Naive thymus-derived CD4-positive, alpha-beta T cell (primary cell): ENCODE measurements at regions of chr6 and their contacts with region 1.

Region 1: DNA sequence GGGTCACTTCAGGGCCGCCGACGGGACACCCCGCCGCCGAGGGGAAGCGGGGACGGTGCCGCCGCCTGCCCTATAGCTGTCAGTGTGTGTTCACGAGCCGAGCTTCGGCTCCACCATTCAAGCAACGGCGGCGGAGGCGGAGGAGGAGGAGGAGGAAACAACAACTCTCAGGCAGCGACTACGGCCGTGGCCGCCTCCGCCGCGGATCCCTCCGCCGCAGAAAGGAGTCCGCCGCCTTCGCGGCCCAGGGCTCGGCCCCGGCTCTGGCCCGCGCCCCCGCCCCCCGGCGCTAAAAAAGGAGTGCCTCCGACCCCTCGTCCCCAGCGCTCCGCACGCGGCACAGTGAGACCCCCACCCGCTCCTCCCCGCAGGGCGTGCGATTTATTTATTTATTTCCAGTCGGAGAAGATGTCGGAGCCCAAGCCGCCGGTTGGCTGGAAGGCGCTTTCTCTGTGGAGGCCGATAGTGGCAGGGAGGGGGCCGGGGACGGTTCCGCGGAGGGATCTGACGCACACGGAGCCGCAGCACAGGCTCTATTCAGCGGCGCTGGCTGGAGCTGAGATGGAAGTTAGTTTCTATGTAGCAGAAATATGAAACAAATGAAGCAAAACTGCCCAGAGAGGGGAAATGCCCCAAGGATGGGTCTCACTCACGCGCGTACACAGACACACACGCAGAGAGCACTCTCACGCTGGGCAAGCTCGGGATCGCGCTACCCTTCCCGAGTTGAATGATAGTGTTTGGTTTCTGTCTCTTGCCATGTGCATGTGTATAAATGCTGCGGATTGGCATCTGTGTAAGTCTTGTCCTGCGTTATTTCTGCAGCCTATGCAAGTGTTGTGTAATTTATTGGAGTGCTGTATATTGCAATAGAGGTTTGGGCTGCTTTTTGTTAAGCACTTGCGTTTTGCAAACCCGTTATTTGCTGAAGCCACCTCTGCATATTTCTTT is at the start of gene PHIP:
- DNase-seq: peak; percentile 89 to 97 (median 94)
- ATAC-seq: peak; percentile 90
- H3K4me3 ChIP-seq: peak within 1 kb of the TSS; percentile 83
- H3K4me3 Mint-ChIP-seq: peak within 1 kb of the TSS; percentile 92 to 98 (median 94)
- H3K27ac ChIP-seq: peak within 1 kb of the TSS; percentile 98
- H3K27ac Mint-ChIP-seq: peak within 1 kb of the TSS; percentile 93 to 98 (median 95)
- H3K4me1 ChIP-seq: peaks cover 19 to 21% of the 10 kb centered on the region in 2 donors
- H3K4me1 Mint-ChIP-seq: peaks cover 19 to 46% (median 41%) of the 10 kb centered on the region in 7 donors
- H3K27me3 ChIP-seq: no peaks in the 10 kb centered on the region
- H3K27me3 Mint-ChIP-seq: peaks cover 4 to 23% (median 15%) of the 10 kb centered on the region in 5 donors
- total RNA-seq, gene PHIP: 34.0 to 46.8 (median 41.6) TPM

Region 2: GRCh38 chr6:78867370-78868040 is 210.8 kb before region 1 on chr6 and contains the start of gene IRAK1BP1:
- CTCF ChIA-PET with region 1: no interaction called
- POLR2A ChIA-PET with region 1: interaction called, 12 read pairs
- intact Hi-C with region 1: loop called (anchors 1 kb)
- DNase-seq: peak; percentile 39 to 79 (median 76)
- ATAC-seq: peak; percentile 94
- H3K4me3 ChIP-seq: peak within 1 kb of the TSS; percentile 85
- H3K4me3 Mint-ChIP-seq: peak within 1 kb of the TSS; percentile 91 to 100 (median 98)
- H3K27ac ChIP-seq: peak within 1 kb of the TSS; percentile 68
- H3K27ac Mint-ChIP-seq: peak within 1 kb of the TSS; percentile 87 to 97 (median 96)
- H3K4me1 ChIP-seq: peaks cover 0 to 5% of the 10 kb centered on the region in 2 donors
- H3K4me1 Mint-ChIP-seq: peaks cover 6 to 33% (median 27%) of the 10 kb centered on the region in 7 donors
- H3K27me3 ChIP-seq: no peaks in the 10 kb centered on the region
- H3K27me3 Mint-ChIP-seq: no peaks in the 10 kb centered on the region
- total RNA-seq, gene IRAK1BP1: 0.71 to 3.6 (median 3.1) TPM

Region 3: GRCh38 chr6:79048611-79049010 is 29.7 kb before region 1 on chr6:
- CTCF ChIA-PET with region 1: interaction called, 5 read pairs
- POLR2A ChIA-PET with region 1: interaction called, 15 read pairs
- intact Hi-C with region 1: loop called (anchors 2 to 5 kb)
- DNase-seq: no peak
- ATAC-seq: peak; percentile 55
- H3K4me3 ChIP-seq: no peak overlapping the region
- H3K4me3 Mint-ChIP-seq: no peak overlapping the region
- H3K27ac ChIP-seq: no peak overlapping the region
- H3K27ac Mint-ChIP-seq: no peak overlapping the region
- H3K4me1 ChIP-seq: peaks cover 4% of the 10 kb centered on the region in 2 donors
- H3K4me1 Mint-ChIP-seq: peaks cover 10 to 70% (median 49%) of the 10 kb centered on the region in 7 donors
- H3K27me3 ChIP-seq: no peaks in the 10 kb centered on the region
- H3K27me3 Mint-ChIP-seq: no peaks in the 10 kb centered on the region

Region 4: GRCh38 chr6:79233611-79234149 is 155.3 kb after region 1 on chr6:
- CTCF ChIA-PET with region 1: no interaction called
- POLR2A ChIA-PET with region 1: interaction called, 13 read pairs
- intact Hi-C with region 1: loop called (anchors 1 kb)
- DNase-seq: peak; percentile 34 to 77 (median 54)
- ATAC-seq: peak; percentile 63
- H3K4me3 ChIP-seq: peak overlapping the region; percentile 89
- H3K4me3 Mint-ChIP-seq: peak overlapping the region; percentile 92 to 100 (median 98)
- H3K27ac ChIP-seq: peak overlapping the region; percentile 62
- H3K27ac Mint-ChIP-seq: peak overlapping the region; percentile 64 to 96 (median 90)
- H3K4me1 ChIP-seq: peaks cover 4 to 8% of the 10 kb centered on the region in 2 donors
- H3K4me1 Mint-ChIP-seq: peaks cover 9 to 42% (median 30%) of the 10 kb centered on the region in 7 donors
- H3K27me3 ChIP-seq: no peaks in the 10 kb centered on the region
- H3K27me3 Mint-ChIP-seq: no peaks in the 10 kb centered on the region

Region 5: DNA sequence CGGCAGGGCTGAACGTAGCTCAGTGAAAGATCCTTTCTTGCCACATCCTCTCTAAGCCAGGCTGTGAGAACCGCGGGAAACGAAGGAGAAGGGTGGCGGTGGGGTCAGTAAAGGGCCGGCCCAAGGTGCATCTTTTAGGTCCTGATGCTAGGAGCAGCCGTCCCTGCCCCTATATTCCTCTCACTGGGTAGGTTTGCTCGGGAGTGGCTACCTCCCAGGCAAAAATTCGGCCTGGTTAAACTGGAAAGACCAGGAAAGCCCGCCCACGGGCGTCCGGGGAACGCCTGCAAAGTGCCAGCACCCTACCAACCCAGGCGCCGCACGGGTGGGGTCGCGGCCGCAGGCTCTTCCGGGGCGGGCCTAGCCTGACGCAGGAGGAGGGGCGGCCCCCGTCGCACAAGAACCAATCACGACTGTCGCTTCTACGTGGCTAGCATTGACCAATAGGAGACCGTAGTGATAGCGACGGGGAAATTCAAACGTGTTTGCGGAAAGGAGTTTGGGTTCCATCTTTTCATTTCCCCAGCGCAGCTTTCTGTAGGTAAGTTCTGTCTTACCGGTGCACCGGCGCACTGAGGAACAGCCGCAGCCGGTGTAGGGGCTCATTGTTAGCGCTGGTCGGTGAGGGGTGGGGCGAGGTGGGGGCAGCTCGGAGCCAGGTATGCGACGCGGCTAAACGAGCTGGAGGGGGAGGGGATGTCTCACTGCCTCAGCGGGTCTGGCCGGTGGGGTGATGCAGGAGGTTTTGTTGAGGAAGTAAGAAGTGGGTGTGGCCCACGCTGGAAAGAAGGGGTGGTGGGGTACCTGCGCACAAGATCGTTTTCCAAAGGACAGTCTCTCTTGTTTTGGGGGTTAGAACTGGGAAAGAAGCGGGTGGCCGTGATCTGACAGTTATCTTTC is 926.1 kb after region 1 on chr6 and contains the start of gene TTK:
- CTCF ChIA-PET with region 1: no interaction called
- POLR2A ChIA-PET with region 1: no interaction called
- intact Hi-C with region 1: loop called (anchors 1 to 2 kb)
- DNase-seq: peak; percentile 84 to 94 (median 91)
- ATAC-seq: peak; percentile 100
- H3K4me3 ChIP-seq: peak within 1 kb of the TSS; percentile 94
- H3K4me3 Mint-ChIP-seq: peak within 1 kb of the TSS; percentile 80 to 97 (median 90)
- H3K27ac ChIP-seq: peak within 1 kb of the TSS; percentile 80
- H3K27ac Mint-ChIP-seq: peak within 1 kb of the TSS; percentile 65 to 97 (median 94)
- H3K4me1 ChIP-seq: peaks cover 9 to 10% of the 10 kb centered on the region in 2 donors
- H3K4me1 Mint-ChIP-seq: peaks cover 2 to 41% (median 19%) of the 10 kb centered on the region in 7 donors
- H3K27me3 ChIP-seq: no peaks in the 10 kb centered on the region
- H3K27me3 Mint-ChIP-seq: peaks cover 0 to 5% (median 0%) of the 10 kb centered on the region in 5 donors
- total RNA-seq, gene TTK: 0.13 to 22.4 (median 0.81) TPM